Natural killer cell (primary cell): ENCODE measurements at regions of chr12 and their contacts with region 1.

Region 1: DNA sequence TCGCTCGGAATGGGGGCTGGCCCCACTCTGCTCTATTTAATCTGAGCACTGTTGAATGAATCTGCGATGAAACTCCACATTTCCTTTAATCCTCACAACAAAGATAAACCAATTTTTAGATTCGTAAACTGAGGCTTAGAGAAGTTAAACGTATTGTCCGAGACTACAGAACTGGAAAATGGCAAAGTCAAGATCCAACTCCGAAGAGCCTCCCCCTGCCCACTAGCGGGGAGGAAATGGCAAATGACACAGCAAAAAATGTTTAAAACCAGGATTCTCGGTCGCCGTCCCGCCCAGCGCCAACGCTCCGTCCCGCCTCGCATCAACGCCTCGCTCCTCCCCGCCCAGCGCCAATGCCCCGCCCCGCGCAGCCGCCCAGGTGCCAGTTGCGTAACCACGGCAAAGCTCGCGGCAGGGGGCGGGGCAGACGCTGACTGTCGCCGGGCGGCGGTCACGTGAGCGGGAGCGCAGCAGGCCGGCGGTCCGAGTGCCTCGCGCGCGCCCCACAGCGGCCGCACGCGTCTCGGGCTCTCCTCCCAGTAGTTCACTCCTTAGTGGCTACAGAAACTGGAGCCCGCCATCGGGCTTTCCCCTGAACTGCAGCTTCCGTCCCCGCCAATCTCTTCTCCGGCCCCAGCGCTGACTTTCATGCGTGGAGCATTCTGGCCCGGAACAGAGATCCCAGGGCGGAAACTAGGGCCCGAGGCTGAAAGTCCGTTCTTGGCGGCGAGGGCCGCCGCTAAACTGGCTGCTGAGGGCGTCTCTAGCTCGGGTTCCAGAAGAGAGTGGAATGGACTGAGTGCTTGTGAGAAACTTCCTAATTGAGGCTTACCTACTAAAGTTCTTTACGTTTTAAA is 13.6 kb upstream of the LRRC23 start:
- DNase-seq: peak; percentile 99
- ATAC-seq: peak; percentile 93 to 99 (median 94)
- H3K4me3 ChIP-seq: peak overlapping the region; percentile 70
- H3K4me3 Mint-ChIP-seq: peak overlapping the region; percentile 87
- H3K27ac ChIP-seq: peak overlapping the region; percentile 98
- H3K27ac Mint-ChIP-seq: peak overlapping the region; percentile 95 to 96
- H3K4me1 ChIP-seq: peaks cover 14% of the 10 kb centered on the region
- H3K4me1 Mint-ChIP-seq: peaks cover 11 to 15% of the 10 kb centered on the region in 2 donors
- H3K27me3 ChIP-seq: no peaks in the 10 kb centered on the region
- H3K27me3 Mint-ChIP-seq: no peaks in the 10 kb centered on the region
- CTCF ChIP-seq: peak; percentile 75

Region 2: GRCh38 chr12:6851921-6852650 is 38.9 kb before region 1 on chr12 and contains the start of gene USP5:
- intact Hi-C with region 1: loop called (anchors 1 kb)
- DNase-seq: peak; percentile 96 to 99
- ATAC-seq: peak; percentile 79 to 92 (median 80)
- H3K4me3 ChIP-seq: peak within 1 kb of the TSS; percentile 76
- H3K4me3 Mint-ChIP-seq: peak within 1 kb of the TSS; percentile 91
- H3K27ac ChIP-seq: peak within 1 kb of the TSS; percentile 95
- H3K27ac Mint-ChIP-seq: peak within 1 kb of the TSS; percentile 95 to 99
- H3K4me1 ChIP-seq: peaks cover 22% of the 10 kb centered on the region
- H3K4me1 Mint-ChIP-seq: peaks cover 8 to 43% of the 10 kb centered on the region in 2 donors
- H3K27me3 ChIP-seq: no peaks in the 10 kb centered on the region
- H3K27me3 Mint-ChIP-seq: no peaks in the 10 kb centered on the region
- CTCF ChIP-seq: no peak
- total RNA-seq, gene USP5: 48.3 to 67.2 (median 57.2) TPM

Region 3: DNA sequence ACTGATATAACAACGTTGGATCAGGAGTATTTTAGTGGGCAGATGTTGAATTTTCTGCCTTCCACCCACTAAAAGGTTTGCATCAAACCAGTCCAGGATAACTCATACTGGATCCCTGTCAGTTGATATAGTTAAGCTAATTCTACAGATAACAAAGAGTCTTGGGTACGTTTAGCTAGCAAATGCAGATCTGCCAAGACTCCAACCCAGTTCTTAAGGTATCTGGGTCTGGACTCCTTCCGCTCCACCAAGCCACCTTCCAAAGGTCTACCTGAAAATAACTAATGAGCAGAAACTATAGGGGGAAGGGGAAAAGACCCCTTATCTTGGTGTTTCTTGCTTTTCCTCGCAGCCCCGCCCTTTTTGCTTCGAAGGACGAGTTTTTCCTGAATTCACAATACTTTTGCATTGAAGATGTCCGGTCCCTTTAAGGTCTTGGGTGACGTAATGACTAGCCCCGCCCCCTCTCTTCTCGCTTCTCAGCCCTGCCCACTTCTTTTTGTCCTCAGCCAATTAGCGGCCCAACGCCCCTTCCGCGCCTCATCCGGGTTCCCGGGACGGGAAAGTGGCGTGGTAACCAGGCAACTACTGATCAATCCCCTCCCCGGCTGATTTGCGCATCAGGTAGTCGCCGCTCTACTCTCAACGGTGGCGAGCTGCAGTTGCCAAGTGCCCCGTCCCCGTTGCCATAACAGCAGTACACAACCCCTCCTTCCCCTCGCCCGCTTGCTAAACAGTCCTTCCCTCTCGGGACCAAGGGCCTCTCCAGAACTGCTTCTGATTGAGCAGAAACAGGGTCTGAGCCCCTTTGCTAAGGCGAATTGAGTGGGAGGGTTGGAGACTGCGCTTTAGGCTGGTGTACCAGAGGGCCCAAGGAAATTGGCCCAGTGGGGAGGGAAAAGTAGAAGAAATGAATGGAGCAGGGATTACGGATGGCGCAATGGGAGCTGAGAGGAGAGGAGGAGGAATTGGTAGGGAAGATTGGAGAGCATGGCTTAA is 13.6 kb after region 1 on chr12 and contains the start of gene LRRC23:
- intact Hi-C with region 1: loop called (anchors 1 kb)
- DNase-seq: peak; percentile 94 to 99
- ATAC-seq: peak; percentile 96 to 98 (median 97)
- H3K4me3 ChIP-seq: peak within 1 kb of the TSS; percentile 73
- H3K4me3 Mint-ChIP-seq: no peak within 1 kb of the TSS
- H3K27ac ChIP-seq: peak within 1 kb of the TSS; percentile 95
- H3K27ac Mint-ChIP-seq: no peak within 1 kb of the TSS
- H3K4me1 ChIP-seq: peaks cover 14% of the 10 kb centered on the region
- H3K4me1 Mint-ChIP-seq: no peaks in the 10 kb centered on the region
- H3K27me3 ChIP-seq: no peaks in the 10 kb centered on the region
- H3K27me3 Mint-ChIP-seq: no peaks in the 10 kb centered on the region
- CTCF ChIP-seq: no peak
- total RNA-seq, gene LRRC23: 8.1 to 16.8 (median 9.8) TPM

Region 4: GRCh38 chr12:6996040-6996441 is 105.0 kb after region 1 on chr12:
- intact Hi-C with region 1: no loop called
- DNase-seq: no peak
- ATAC-seq: no peak
- H3K4me3 ChIP-seq: no peak overlapping the region
- H3K4me3 Mint-ChIP-seq: no peak overlapping the region
- H3K27ac ChIP-seq: no peak overlapping the region
- H3K27ac Mint-ChIP-seq: no peak overlapping the region
- H3K4me1 ChIP-seq: no peaks in the 10 kb centered on the region
- H3K4me1 Mint-ChIP-seq: peaks cover 0 to 13% of the 10 kb centered on the region in 2 donors
- H3K27me3 ChIP-seq: no peaks in the 10 kb centered on the region
- H3K27me3 Mint-ChIP-seq: no peaks in the 10 kb centered on the region
- CTCF ChIP-seq: no peak